Gastrocnemius medialis (tissue), 4 donors: ENCODE measurements at regions of chr17 and their contacts with region 1.

Region 1: GRCh38 chr17:69523244-69523861 is 108.9 kb downstream of the MAP2K6 start:
- DNase-seq: peak in 1 of 2 donors; percentile 41
- ATAC-seq: peak; percentile 65 to 69
- H3K4me3 ChIP-seq: peak overlapping the region in 1 of 4 donors; percentile 26
- H3K27ac ChIP-seq: peak overlapping the region; percentile 76 to 85 (median 79)
- H3K4me1 ChIP-seq: peaks cover 34 to 36% of the 10 kb centered on the region in 2 donors
- H3K27me3 ChIP-seq: no peaks in the 10 kb centered on the region
- CTCF ChIP-seq: peak; percentile 74 to 83 (median 79)
- POLR2A ChIP-seq: no peak

Region 2: DNA sequence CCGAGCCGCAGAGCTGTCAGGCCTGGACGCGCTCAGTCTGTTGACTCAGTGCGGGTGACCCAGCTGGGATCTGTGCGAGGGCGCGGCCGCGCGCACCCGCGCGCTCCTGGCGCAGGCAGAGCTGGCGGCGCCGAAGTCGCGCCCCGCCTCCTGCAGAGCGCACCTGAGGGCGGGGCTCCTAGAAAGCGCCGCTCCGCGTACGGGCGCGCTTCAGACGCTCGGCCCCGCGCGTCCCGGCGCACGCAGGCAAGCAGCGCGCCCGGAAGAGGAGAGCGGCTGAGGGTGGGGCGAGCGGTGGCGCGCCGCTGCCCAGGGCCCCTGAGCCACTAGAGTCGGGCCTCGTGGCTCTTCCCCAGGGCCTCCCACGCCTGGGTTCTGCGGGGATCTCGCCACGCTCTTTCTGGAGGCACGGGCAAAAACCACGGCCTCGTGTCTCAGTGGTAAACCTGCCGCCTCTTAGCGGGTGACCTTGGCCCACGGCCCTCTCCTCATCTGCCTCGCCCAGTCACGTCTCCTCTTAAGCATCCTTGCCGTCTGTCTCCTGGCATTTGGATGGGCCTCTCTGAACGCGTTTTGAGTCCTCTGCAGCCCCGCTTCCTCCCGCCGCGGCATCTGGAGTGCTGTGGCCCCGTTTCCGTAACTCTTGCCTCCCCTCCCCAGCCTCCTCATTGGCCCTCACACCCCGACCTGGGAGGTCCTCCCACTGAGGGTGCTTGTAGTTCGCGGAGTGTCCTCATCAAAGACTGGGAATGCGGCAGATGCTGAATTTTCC is 196.1 kb before region 1 on chr17 and contains the start of gene ABCA5:
- in situ Hi-C with region 1: loop called in 3 of 4 experiments (anchors 5 to 10 kb)
- intact Hi-C with region 1: loop called (anchors 5 kb)
- DNase-seq: peak; percentile 74 to 91
- ATAC-seq: peak; percentile 86
- H3K4me3 ChIP-seq: peak within 1 kb of the TSS; percentile 79 to 94 (median 90)
- H3K27ac ChIP-seq: peak within 1 kb of the TSS; percentile 91 to 98 (median 97)
- H3K4me1 ChIP-seq: peaks cover 25 to 34% of the 10 kb centered on the region in 2 donors
- H3K27me3 ChIP-seq: no peaks in the 10 kb centered on the region
- CTCF ChIP-seq: peak in 2 of 5 experiments; percentile 3
- POLR2A ChIP-seq: peak; percentile 97 to 99
- total RNA-seq, gene ABCA5: 62.8 to 228 (median 123) TPM

Region 3: DNA sequence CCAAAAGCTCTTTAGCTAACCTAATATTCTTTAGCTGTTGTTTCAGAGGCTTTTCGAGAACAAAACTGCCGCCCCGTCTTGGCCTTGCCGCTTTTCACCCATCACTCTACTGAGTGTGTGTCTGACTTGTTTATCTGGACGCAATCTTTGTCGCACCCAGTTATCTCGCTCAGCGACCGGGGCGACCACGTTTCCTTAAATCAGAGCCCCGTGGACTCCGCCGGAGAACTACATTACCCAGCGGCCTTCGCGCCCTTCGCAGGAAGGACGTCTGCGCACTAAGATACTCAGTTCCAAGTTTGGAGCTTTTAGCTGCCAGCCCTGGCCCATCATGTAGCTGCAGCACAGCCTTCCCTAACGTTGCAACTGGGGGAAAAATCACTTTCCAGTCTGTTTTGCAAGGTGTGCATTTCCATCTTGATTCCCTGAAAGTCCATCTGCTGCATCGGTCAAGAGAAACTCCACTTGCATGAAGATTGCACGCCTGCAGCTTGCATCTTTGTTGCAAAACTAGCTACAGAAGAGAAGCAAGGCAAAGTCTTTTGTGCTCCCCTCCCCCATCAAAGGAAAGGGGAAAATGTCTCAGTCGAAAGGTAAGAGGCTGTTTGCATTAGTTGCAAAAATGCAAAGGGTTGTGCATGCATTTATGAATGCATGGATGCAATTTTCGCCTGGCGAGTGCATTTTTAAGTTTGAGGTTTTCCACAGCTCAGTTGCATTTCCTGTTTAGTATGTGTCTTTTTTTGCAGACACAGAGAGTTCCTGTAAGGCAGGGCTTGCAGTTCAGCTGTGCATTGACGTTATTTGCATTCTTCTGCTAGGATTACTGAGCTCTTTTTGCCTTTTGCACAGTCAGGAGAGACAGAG is 108.7 kb before region 1 on chr17 and contains the start of gene MAP2K6:
- in situ Hi-C with region 1: no loop called
- intact Hi-C with region 1: loop called (anchors 5 kb)
- DNase-seq: peak; percentile 78 to 83
- ATAC-seq: peak; percentile 86 to 91
- H3K4me3 ChIP-seq: peak within 1 kb of the TSS; percentile 60 to 94 (median 66)
- H3K27ac ChIP-seq: peak within 1 kb of the TSS; percentile 84 to 88 (median 86)
- H3K4me1 ChIP-seq: peaks cover 36 to 44% of the 10 kb centered on the region in 2 donors
- H3K27me3 ChIP-seq: no peaks in the 10 kb centered on the region
- CTCF ChIP-seq: no peak
- POLR2A ChIP-seq: peak; percentile 38 to 41
- total RNA-seq, gene MAP2K6: 35.1 to 351 (median 223) TPM

Region 4: GRCh38 chr17:70144260-70144846 is 621.0 kb after region 1 on chr17:
- in situ Hi-C with region 1: no loop called
- intact Hi-C with region 1: loop called (anchors 2 kb)
- DNase-seq: no peak
- ATAC-seq: peak; percentile 37 to 49
- H3K4me3 ChIP-seq: no peak overlapping the region
- H3K27ac ChIP-seq: no peak overlapping the region
- H3K4me1 ChIP-seq: peaks cover 4 to 7% of the 10 kb centered on the region in 2 donors
- H3K27me3 ChIP-seq: no peaks in the 10 kb centered on the region
- CTCF ChIP-seq: peak; percentile 69 to 80 (median 72)
- POLR2A ChIP-seq: no peak

Region 5: GRCh38 chr17:70622368-70623260 is 1099.3 kb after region 1 on chr17:
- in situ Hi-C with region 1: no loop called
- intact Hi-C with region 1: loop called (anchors 2 kb)
- DNase-seq: peak in 1 of 2 donors; percentile 34
- ATAC-seq: peak in 1 of 2 donors; percentile 51
- H3K4me3 ChIP-seq: no peak overlapping the region
- H3K27ac ChIP-seq: no peak overlapping the region
- H3K4me1 ChIP-seq: peaks cover 0 to 10% of the 10 kb centered on the region in 2 donors
- H3K27me3 ChIP-seq: no peaks in the 10 kb centered on the region
- CTCF ChIP-seq: peak; percentile 22 to 55 (median 37)
- POLR2A ChIP-seq: no peak